ENCODE measurements at regions of chr10 and their contacts with region 1.

Region 1: GRCh38 chr10:110016039-110016438 is 8.3 kb downstream of the ADD3 start:
- DNase-seq: no peak
- H3K4me3 ChIP-seq: no peak overlapping the region
- H3K27ac ChIP-seq: peak overlapping the region in 1 of 8 donors; percentile 29
- H3K4me1 ChIP-seq: peaks cover 8 to 97% (median 51%) of the 10 kb centered on the region in 6 donors
- H3K27me3 ChIP-seq: no peaks in the 10 kb centered on the region
- CTCF ChIP-seq: peak in 3 of 11 experiments; percentile 11 to 13 (median 11)
- POLR2A ChIP-seq: no peak

Region 2: GRCh38 chr10:110067960-110068770 is 52.1 kb after region 1 on chr10:
- intact Hi-C with region 1: loop called (anchors 10 kb)
- DNase-seq: no peak
- H3K4me3 ChIP-seq: peak overlapping the region in 1 of 8 donors; percentile 27
- H3K27ac ChIP-seq: peak overlapping the region; percentile 67 to 84 (median 81)
- H3K4me1 ChIP-seq: peaks cover 31 to 100% (median 77%) of the 10 kb centered on the region in 6 donors
- H3K27me3 ChIP-seq: no peaks in the 10 kb centered on the region
- CTCF ChIP-seq: no peak
- POLR2A ChIP-seq: no peak